CD4-positive, alpha-beta T cell (primary cell): ENCODE measurements at regions of chr12 and their contacts with region 1.

Region 1: GRCh38 chr12:7219599-7220243 is 30.2 kb downstream of the PEX5 start:
- DNase-seq: peak; percentile 51 to 85 (median 67)
- ATAC-seq: peak; percentile 61
- H3K4me3 ChIP-seq: no peak overlapping the region
- H3K4me3 Mint-ChIP-seq: no peak overlapping the region
- H3K27ac ChIP-seq: no peak overlapping the region
- H3K27ac Mint-ChIP-seq: no peak overlapping the region
- H3K4me1 ChIP-seq: no peaks in the 10 kb centered on the region
- H3K4me1 Mint-ChIP-seq: no peaks in the 10 kb centered on the region
- H3K27me3 ChIP-seq: no peaks in the 10 kb centered on the region
- H3K27me3 Mint-ChIP-seq: no peaks in the 10 kb centered on the region
- CTCF ChIP-seq: peak; percentile 81

Region 2: DNA sequence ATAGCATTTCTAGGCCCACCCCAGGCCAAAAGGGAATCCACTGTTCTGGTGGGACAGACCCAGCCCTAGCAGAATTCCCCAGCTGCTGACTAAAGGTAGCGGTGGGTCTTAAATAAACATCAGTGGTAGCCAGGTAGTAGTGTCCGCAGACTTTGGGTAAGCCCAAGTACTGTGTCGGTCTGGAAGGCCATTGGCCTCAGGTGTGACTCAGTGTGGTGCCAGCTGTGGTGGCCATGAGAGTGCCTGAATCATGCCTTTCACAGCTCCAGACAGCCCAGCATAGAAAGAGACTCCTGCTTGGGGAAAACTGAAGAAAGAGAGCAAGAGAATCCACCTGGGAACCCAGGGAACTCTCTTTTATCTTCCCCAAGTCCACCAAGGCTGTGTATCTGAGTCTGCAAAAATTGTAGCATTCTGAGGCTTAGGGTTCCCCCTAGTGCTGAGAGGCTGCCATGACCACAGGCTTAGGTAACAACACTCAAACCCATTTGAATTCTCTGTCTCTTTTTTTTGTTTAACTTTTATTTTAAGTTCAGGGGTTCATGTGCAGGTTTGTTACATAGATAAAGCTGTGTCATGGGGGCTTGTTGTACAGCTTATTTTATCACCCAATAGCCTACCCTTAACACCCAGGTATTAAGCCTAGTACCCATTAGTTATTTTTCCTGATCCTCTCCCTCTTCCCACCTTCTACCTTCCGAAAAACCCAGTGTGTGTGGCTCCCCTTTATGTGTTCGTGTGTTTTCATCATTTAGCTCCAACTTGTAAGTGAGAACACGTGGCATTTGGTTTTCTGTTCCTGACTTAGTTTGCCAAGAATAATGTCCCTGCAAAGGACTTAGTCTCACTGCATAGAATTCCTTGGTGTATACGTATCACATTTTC is 240.9 kb after region 1 on chr12:
- CTCF ChIA-PET with region 1: interaction called, 4 read pairs
- POLR2A ChIA-PET with region 1: no interaction called
- intact Hi-C with region 1: loop called in 1 of 2 experiments (anchors 1 kb)
- DNase-seq: peak; percentile 19 to 73 (median 37)
- ATAC-seq: peak; percentile 84
- H3K4me3 ChIP-seq: no peak overlapping the region
- H3K4me3 Mint-ChIP-seq: no peak overlapping the region
- H3K27ac ChIP-seq: no peak overlapping the region
- H3K27ac Mint-ChIP-seq: no peak overlapping the region
- H3K4me1 ChIP-seq: no peaks in the 10 kb centered on the region
- H3K4me1 Mint-ChIP-seq: no peaks in the 10 kb centered on the region
- H3K27me3 ChIP-seq: no peaks in the 10 kb centered on the region
- H3K27me3 Mint-ChIP-seq: peaks cover 5% of the 10 kb centered on the region
- CTCF ChIP-seq: peak; percentile 82

Region 3: DNA sequence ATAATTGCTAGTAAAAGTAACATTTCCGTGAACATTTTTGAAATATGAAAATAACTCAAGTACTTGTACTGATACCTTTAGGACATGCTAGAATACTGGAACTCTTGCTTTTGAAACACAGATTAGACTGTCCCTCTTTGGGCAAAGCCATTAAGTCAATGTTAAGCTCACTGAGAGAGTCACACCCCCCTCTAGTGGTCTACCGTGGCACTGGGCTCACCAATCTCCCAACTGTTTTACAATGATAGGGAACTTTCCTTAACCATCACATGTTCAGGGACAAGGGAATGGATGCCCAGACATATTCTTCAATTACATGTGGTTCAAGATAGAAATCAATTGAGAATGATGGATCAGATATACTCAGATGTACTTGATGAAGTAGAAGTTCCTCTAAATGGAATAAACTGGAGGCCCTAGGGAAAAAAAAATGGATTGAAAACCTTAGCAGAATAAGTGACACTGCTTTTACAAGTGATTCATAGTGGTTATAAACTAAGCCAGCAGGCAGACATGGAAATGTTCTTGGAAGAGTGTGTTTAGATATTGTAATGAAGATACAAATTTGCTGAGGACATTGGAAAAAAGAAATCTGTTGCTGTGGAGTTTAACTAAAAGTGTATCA is 587.3 kb after region 1 on chr12:
- CTCF ChIA-PET with region 1: interaction called, 3 read pairs
- POLR2A ChIA-PET with region 1: no interaction called
- intact Hi-C with region 1: loop called (anchors 1 to 10 kb)
- DNase-seq: peak; percentile 15 to 71 (median 42)
- ATAC-seq: peak; percentile 54
- H3K4me3 ChIP-seq: no peak overlapping the region
- H3K4me3 Mint-ChIP-seq: no peak overlapping the region
- H3K27ac ChIP-seq: no peak overlapping the region
- H3K27ac Mint-ChIP-seq: no peak overlapping the region
- H3K4me1 ChIP-seq: no peaks in the 10 kb centered on the region
- H3K4me1 Mint-ChIP-seq: no peaks in the 10 kb centered on the region
- H3K27me3 ChIP-seq: no peaks in the 10 kb centered on the region
- H3K27me3 Mint-ChIP-seq: peaks cover 4% of the 10 kb centered on the region
- CTCF ChIP-seq: peak; percentile 93